Ovary (tissue), 10 donors: ENCODE measurements at regions of chr21 and their contacts with region 1.

Region 1: DNA sequence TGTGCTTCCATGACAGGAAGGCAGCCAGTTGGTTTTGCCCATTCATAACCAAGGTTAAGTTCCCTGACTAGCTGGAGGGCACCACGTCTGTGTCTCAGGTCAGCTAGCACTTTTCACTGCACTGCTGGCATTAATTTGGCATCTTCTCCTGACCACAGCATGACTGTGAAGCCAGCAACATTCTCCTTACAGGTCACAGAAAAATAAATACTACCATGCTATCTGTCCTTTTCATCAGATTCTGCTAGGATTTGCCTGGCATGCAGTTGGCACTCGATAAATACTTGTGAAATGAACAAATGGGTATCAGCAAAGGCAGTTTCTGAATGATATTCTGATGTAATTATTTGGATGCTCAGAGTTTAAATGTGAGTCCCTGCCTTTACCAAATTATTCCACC is 46.3 kb upstream of the IFNAR2 start:
- DNase-seq: no peak
- H3K4me3 ChIP-seq: no peak overlapping the region
- H3K27ac ChIP-seq: no peak overlapping the region
- H3K4me1 ChIP-seq: no peaks in the 10 kb centered on the region
- H3K27me3 ChIP-seq: no peaks in the 10 kb centered on the region
- CTCF ChIP-seq: no peak
- EP300 ChIP-seq: no peak
- POLR2A ChIP-seq: no peak

Region 2: GRCh38 chr21:32844653-32845436 is 338.6 kb before region 1 on chr21:
- intact Hi-C with region 1: loop called in 1 of 4 experiments (anchors 5 kb)
- DNase-seq: no peak
- H3K4me3 ChIP-seq: no peak overlapping the region
- H3K27ac ChIP-seq: no peak overlapping the region
- H3K4me1 ChIP-seq: no peaks in the 10 kb centered on the region
- H3K27me3 ChIP-seq: no peaks in the 10 kb centered on the region
- CTCF ChIP-seq: no peak
- EP300 ChIP-seq: no peak
- POLR2A ChIP-seq: no peak

Region 3: DNA sequence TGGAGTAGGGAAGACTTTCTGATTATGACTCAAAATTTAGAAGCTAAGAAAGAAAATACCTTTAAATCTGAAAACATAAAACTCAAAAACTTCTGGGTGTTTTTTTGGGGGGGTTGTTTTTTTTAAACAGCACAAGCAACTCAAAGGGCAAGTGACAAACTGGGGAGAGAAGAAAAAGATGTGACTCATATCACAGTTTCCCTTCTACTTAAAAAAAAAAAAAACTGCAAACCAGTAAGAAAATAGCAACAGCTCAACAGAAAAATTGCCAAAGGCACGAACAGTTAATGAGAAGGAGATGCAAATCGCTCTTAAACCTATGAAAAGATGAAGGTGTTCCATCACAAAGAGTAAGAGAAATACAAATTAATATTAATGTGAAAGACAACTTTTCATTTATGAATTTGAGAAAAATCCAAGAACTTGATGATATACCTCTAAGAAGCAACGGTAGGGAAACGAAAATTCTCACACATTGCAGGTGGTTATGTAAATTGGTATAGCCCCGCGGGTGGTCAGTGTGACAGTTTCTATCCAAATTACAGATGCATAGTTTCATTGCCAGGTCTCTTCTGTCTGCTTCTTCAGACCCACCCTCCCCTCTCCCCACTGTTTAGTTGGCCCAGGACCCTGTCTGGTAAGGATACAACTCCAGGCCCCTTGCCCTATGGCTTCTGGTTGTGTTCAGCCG is 55.3 kb after region 1 on chr21:
- intact Hi-C with region 1: no loop called
- DNase-seq: no peak
- H3K4me3 ChIP-seq: no peak overlapping the region
- H3K27ac ChIP-seq: no peak overlapping the region
- H3K4me1 ChIP-seq: no peaks in the 10 kb centered on the region
- H3K27me3 ChIP-seq: no peaks in the 10 kb centered on the region
- CTCF ChIP-seq: no peak
- EP300 ChIP-seq: no peak
- POLR2A ChIP-seq: no peak

Region 4: DNA sequence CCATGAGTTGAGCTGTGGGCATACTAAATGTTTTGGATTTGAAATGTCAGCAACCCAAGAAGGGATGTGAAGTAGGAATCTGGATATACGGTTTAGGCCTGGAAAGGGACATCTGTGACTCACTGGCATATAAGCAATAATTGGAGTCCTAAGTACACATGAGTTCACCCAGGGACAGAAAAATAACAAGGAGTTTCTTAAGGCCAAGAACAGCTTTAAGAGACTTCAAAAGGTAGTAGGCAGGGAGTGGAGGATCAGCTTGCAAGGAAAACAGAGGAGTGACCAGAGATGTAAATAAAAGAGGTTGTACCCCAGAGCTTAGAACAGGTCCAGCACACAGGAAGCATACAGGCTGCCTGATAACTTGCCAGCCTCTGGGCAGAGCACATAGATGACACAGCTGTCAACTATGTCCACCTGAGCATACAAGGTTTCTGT is 268.2 kb after region 1 on chr21:
- intact Hi-C with region 1: no loop called
- DNase-seq: no peak
- H3K4me3 ChIP-seq: no peak overlapping the region
- H3K27ac ChIP-seq: no peak overlapping the region
- H3K4me1 ChIP-seq: no peaks in the 10 kb centered on the region
- H3K27me3 ChIP-seq: no peaks in the 10 kb centered on the region
- CTCF ChIP-seq: no peak
- EP300 ChIP-seq: no peak
- POLR2A ChIP-seq: no peak